ENCODE measurements at regions of chr9 and their contacts with region 1.

Region 1: GRCh38 chr9:115013998-115014397 is 83.6 kb upstream of the TNFSF8 start:
- DNase-seq: peak in 9 of 10 donors; percentile 45 to 77 (median 65)
- H3K4me3 ChIP-seq: no peak overlapping the region
- H3K27ac ChIP-seq: no peak overlapping the region
- H3K27me3 ChIP-seq: peaks cover 0 to 3% (median 0%) of the 10 kb centered on the region in 45 donors
- CTCF ChIP-seq: peak; percentile 66 to 95 (median 84)

Region 2: DNA sequence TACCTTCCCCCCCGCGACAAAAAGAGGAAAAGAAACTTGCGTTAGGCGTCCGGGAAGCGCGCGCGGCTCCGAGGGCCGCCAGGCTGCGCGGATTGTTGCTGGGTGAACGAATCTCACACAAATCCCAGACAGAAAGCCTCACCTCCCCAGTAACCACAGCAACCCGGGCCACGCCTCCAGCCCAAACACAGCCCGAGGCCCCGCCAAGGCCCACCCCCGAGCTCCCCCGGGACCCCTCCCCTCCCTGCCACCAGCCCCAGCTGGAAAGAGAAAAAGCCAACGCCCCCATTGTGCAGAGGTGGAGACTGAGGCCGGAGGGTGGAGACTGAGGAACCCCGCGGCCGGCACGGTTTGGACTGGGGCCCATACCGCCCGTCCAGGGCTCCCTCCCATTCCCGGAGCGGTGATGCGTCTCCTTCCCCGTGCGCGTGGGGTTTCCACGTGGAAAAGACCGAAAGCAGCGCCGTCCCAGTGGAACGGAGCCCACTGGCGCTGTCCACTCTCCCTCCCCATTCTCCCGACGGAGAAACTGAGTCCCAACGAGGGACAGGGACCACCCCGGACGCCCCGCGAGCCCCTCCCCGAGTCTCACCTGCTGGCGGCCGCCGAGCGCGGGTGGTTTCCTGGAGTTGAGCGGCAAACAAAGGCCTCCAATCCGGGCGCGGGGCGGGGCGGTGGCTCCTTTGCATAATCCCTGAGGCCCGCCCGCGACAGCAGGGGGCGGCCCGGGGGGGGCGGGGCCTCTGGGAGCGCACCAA is 616.0 kb before region 1 on chr9:
- intact Hi-C with region 1: loop called (anchors 5 to 10 kb)
- DNase-seq: peak; percentile 74 to 97 (median 95)
- H3K4me3 ChIP-seq: peak overlapping the region; percentile 62 to 98 (median 87)
- H3K27ac ChIP-seq: peak overlapping the region in 57 of 59 donors; percentile 4 to 89 (median 74)
- H3K27me3 ChIP-seq: no peaks in the 10 kb centered on the region
- CTCF ChIP-seq: peak in 31 of 56 donors; percentile 6 to 60 (median 30)

Region 3: GRCh38 chr9:114662081-114662989 is 351.7 kb before region 1 on chr9:
- intact Hi-C with region 1: loop called (anchors 2 to 5 kb)
- DNase-seq: peak in 6 of 10 donors; percentile 4 to 56 (median 42)
- H3K4me3 ChIP-seq: no peak overlapping the region
- H3K27ac ChIP-seq: no peak overlapping the region
- H3K27me3 ChIP-seq: peaks cover 0 to 3% (median 0%) of the 10 kb centered on the region in 45 donors
- CTCF ChIP-seq: peak; percentile 42 to 89 (median 80)

Region 4: DNA sequence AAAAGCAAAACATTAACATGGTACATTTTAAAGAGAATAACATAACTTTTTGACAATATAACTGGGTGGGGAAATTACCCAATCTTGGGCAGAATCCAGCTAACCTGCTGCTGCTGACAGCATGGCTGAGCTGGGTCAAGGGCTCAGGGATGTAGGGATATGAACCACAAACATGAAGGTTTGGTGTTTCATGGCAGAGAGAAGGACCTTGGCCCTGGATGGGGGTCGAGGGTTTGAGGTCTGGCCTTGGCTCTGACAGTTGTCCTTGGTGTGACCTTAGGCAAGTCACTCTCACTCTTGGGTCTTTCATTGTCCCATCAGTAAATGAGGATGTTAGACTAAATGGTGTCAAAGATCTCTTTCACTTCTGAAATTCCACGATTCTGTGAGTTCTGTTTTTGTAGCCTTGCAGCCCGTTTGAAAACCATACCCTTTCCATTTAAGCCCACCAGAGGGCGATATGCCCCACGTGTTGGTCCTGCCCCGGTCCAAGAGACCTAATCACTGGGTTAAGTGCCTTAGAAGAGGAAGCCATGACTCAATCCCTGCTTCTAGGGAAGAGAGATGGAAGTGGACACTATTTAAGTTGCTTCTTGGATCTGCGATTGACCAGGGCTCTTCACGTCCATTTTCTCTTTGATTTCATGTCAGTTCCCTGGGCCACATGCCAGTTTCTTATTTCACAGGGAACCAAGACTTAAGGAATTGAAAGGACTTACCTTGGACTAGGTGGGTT is 275.2 kb before region 1 on chr9:
- intact Hi-C with region 1: loop called (anchors 2 to 10 kb)
- DNase-seq: peak in 7 of 10 donors; percentile 18 to 72 (median 55)
- H3K4me3 ChIP-seq: no peak overlapping the region
- H3K27ac ChIP-seq: no peak overlapping the region
- H3K27me3 ChIP-seq: peaks cover 0 to 3% (median 0%) of the 10 kb centered on the region in 45 donors
- CTCF ChIP-seq: peak; percentile 64 to 93 (median 82)

Region 5: GRCh38 chr9:114911167-114911821 is 102.7 kb before region 1 on chr9:
- intact Hi-C with region 1: loop called in 1 of 2 experiments (anchors 5 kb)
- DNase-seq: peak in 1 of 10 donors; percentile 43
- H3K4me3 ChIP-seq: no peak overlapping the region
- H3K27ac ChIP-seq: no peak overlapping the region
- H3K27me3 ChIP-seq: no peaks in the 10 kb centered on the region
- CTCF ChIP-seq: peak; percentile 42 to 83 (median 72)

Region 6: DNA sequence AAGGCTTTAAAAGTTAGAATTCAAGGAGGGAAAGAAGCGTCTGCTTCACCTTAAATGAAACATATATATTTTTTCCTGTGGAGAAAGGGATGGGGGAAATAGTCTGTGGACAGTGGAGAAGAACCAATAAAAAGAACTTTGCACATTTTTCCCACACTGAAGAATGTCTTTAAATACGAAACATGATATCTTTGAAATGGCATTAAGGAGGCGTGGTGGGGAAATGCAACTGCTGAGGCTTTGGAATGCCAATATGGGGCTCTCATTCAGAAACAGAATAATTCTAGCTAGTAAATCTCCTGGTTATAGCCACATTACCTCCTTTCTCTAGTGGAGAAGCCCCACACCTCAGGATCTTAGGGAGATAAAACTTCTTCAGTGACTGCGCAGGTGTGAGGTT is 57.2 kb after region 1 on chr9:
- intact Hi-C with region 1: no loop called
- DNase-seq: no peak
- H3K4me3 ChIP-seq: no peak overlapping the region
- H3K27ac ChIP-seq: no peak overlapping the region
- H3K27me3 ChIP-seq: peaks cover 0 to 4% (median 0%) of the 10 kb centered on the region in 45 donors
- CTCF ChIP-seq: no peak